ENCODE measurements at regions of chr17 and their contacts with region 1.

Region 1: DNA sequence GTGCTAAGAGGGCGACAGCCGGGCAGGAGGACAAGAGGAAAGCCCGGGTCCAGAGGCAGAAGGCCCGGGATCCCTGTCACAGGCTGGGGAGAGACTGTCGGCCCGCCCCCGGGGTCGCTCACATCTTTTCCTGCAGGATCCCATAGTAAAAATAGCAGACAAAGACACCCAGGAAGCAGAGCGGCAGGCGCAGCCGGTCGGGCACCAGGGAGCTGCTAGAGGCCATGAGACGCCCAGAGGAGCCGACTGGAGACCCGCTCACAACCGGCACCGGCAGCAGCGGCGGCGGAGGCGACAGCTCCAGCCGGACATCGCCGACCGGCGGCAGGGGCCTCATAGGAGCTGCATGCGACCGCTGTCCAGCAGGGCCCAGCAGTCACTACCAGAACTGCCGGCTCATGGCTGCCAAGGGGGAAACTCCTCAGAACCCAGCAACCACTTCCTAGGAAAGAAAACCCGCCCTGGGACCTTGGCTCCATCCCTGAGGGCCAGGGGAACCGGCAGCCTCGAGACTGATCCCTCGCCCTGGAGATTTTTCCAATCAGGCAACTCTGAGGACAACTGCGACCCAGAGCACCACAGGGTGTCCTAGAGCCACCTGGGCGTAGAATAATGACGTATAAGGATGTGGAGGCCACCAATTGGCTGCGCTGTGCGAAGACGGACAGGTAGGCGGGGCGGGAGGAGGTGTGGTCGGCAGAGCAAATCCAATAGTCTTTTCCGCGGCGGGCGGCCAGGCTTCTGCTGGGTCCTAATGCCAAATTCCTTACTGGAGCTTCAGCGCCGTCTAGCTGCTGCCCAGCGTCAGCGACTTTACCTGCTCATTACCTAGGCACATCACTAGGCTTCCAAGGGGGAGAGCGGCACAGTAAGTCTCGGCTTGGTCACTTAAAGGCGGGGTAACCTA is at the start of gene SLC35B1:
- DNase-seq: peak; percentile 98 to 99 (median 99)
- H3K4me3 ChIP-seq: peak within 1 kb of the TSS; percentile 87
- H3K27ac ChIP-seq: peak within 1 kb of the TSS; percentile 85 to 91
- H3K4me1 ChIP-seq: peaks cover 3% of the 10 kb centered on the region
- H3K27me3 ChIP-seq: no peaks in the 10 kb centered on the region
- CTCF ChIP-seq: peak; percentile 53 to 60 (median 56)
- EP300 ChIP-seq: no peak
- POLR2A ChIP-seq: peak; percentile 33
- total RNA-seq, gene SLC35B1: 22.9 to 53.3 (median 28.8) TPM

Region 2: DNA sequence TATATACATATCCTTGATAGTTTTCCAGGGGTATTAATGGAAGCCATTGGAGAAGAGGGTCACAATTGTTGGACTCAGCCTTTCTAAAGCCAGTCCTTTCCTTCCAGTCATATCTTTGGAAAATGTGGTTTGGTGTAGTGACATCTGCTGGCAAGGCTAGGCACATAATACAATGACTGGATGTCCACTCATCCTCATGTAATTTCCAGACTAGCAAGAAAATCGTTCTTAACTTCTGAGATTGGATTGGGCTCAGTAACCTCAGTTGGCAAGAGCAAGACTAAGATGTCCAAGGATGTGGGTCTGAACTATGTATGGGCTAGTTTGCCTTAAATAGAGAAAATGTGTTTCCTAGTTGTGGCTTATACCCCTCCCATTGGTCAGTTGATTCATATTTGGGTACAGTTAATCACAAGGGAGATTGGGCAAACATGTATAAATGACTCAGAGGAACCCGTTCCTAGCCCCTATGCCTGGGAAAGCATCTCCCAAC is 71.9 kb after region 1 on chr17:
- intact Hi-C with region 1: loop called in 3 of 4 experiments (anchors 5 kb)
- DNase-seq: peak in 2 of 5 donors; percentile 20 to 52
- H3K4me3 ChIP-seq: no peak overlapping the region
- H3K27ac ChIP-seq: no peak overlapping the region
- H3K4me1 ChIP-seq: peaks cover 4% of the 10 kb centered on the region
- H3K27me3 ChIP-seq: no peaks in the 10 kb centered on the region
- CTCF ChIP-seq: peak in 2 of 3 donors; percentile 59 to 66
- EP300 ChIP-seq: no peak
- POLR2A ChIP-seq: no peak

Region 3: DNA sequence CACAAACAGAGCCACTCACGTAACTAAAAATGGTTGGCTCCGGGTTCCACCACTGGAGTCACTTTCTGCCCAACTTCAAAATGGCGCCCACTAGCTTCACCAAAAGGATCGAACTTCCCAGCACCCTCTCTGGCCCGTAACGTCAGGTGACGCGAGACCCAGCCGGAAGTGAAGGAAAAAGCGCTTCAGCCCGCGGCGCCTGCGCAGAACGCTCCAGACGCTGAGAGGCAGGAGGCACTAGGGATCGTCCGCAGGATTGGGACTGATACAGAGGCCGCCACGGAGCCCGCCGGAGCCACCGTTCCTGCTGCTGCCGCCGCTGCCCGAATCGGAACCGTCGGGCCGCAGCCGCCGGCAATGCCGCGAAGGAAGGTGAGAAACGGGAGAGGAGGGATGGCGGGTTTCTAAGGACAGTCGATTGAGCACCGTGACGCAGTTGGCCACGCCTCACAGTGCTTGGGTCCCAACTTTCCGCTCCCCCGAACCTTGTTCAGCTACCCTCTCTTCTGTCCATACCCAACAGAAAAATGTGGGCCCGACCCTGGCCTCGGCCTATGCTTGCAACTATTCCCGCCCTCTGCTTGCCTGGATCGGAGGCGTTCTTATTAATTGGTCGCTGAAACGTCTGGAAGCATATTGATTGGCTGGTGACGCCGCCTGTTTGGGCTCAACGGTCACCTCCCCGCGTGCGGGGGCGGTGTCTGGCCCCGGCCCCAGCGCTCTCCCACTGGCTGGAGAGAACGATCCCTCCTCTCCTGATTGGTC is 80.8 kb after region 1 on chr17 and contains the start of gene KAT7:
- intact Hi-C with region 1: loop called in 3 of 4 experiments (anchors 1 to 5 kb)
- DNase-seq: peak; percentile 99
- H3K4me3 ChIP-seq: peak within 1 kb of the TSS; percentile 74
- H3K27ac ChIP-seq: peak within 1 kb of the TSS; percentile 80 to 98
- H3K4me1 ChIP-seq: peaks cover 6% of the 10 kb centered on the region
- H3K27me3 ChIP-seq: no peaks in the 10 kb centered on the region
- CTCF ChIP-seq: peak in 2 of 3 donors; percentile 25 to 53
- EP300 ChIP-seq: no peak
- POLR2A ChIP-seq: peak; percentile 96
- total RNA-seq, gene KAT7: 23.4 to 76.6 (median 62.8) TPM

Region 4: GRCh38 chr17:49851387-49852291 is 143.8 kb after region 1 on chr17:
- intact Hi-C with region 1: loop called in 1 of 4 experiments (anchors 5 kb)
- DNase-seq: peak; percentile 46 to 80 (median 77)
- H3K4me3 ChIP-seq: peak overlapping the region; percentile 31
- H3K27ac ChIP-seq: no peak overlapping the region
- H3K4me1 ChIP-seq: peaks cover 1% of the 10 kb centered on the region
- H3K27me3 ChIP-seq: no peaks in the 10 kb centered on the region
- CTCF ChIP-seq: peak; percentile 29 to 46 (median 31)
- EP300 ChIP-seq: no peak
- POLR2A ChIP-seq: no peak

Region 5: GRCh38 chr17:49987681-49988441 is 280.0 kb after region 1 on chr17:
- intact Hi-C with region 1: loop called in 1 of 4 experiments (anchors 10 kb)
- DNase-seq: peak in 2 of 5 donors; percentile 12 to 42
- H3K4me3 ChIP-seq: no peak overlapping the region
- H3K27ac ChIP-seq: no peak overlapping the region
- H3K4me1 ChIP-seq: peaks cover 3% of the 10 kb centered on the region
- H3K27me3 ChIP-seq: no peaks in the 10 kb centered on the region
- CTCF ChIP-seq: no peak
- EP300 ChIP-seq: no peak
- POLR2A ChIP-seq: no peak

Measured in ovary (tissue), 10 donors.